ENCODE measurements at regions of chr5 and their contacts with region 1.

Region 1: DNA sequence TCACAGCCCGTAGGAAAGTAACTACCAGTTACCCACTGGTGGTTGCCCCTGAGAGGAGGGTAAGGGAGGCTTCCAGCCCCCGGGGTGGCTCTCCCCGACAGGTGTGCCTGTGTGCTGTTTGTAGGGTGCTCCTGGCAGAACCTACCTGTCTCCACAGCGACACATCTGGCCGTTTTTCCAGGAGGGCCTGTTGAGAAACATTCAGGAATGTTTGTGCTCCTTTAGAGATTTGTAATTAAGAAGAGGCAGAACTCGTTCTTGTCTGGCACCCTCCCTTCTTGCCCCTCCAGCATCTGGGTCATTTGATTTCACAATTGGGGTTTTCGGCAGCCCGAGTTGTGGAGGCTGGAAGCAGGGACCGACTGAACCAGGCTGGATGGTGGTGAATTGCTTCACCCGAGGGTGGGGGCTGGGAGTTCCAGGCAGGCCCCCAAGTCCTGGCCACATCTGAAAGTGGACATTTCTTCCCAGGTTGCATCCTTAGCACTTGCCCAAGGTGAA is 74.2 kb downstream of the WWC1 start:
- DNase-seq: peak; percentile 75
- ATAC-seq: peak; percentile 32
- H3K4me3 ChIP-seq: peak overlapping the region; percentile 43
- H3K27ac ChIP-seq: peak overlapping the region; percentile 93
- H3K4me1 ChIP-seq: peaks cover 64% of the 10 kb centered on the region
- H3K27me3 ChIP-seq: no peaks in the 10 kb centered on the region
- CTCF ChIP-seq: peak; percentile 71

Region 2: GRCh38 chr5:168328814-168329213 is 36.8 kb before region 1 on chr5:
- CTCF ChIA-PET with region 1: interaction called, 3 read pairs
- POLR2A ChIA-PET with region 1: no interaction called
- intact Hi-C with region 1: loop called (anchors 1 kb)
- DNase-seq: peak; percentile 30
- ATAC-seq: no peak
- H3K4me3 ChIP-seq: peak overlapping the region; percentile 44; the same call in 1 of the 2 replicates
- H3K27ac ChIP-seq: peak overlapping the region; percentile 21; the same call in 1 of the 2 replicates
- H3K4me1 ChIP-seq: peaks cover 74% of the 10 kb centered on the region
- H3K27me3 ChIP-seq: no peaks in the 10 kb centered on the region
- CTCF ChIP-seq: no peak

Region 3: GRCh38 chr5:168409580-168410458 is 44.2 kb after region 1 on chr5:
- CTCF ChIA-PET with region 1: no interaction called
- POLR2A ChIA-PET with region 1: interaction called, 3 read pairs
- intact Hi-C with region 1: loop called (anchors 5 kb)
- DNase-seq: peak; percentile 62
- ATAC-seq: peak; percentile 45
- H3K4me3 ChIP-seq: peak overlapping the region; percentile 42
- H3K27ac ChIP-seq: peak overlapping the region; percentile 88
- H3K4me1 ChIP-seq: peaks cover 62% of the 10 kb centered on the region
- H3K27me3 ChIP-seq: no peaks in the 10 kb centered on the region
- CTCF ChIP-seq: no peak

Region 4: DNA sequence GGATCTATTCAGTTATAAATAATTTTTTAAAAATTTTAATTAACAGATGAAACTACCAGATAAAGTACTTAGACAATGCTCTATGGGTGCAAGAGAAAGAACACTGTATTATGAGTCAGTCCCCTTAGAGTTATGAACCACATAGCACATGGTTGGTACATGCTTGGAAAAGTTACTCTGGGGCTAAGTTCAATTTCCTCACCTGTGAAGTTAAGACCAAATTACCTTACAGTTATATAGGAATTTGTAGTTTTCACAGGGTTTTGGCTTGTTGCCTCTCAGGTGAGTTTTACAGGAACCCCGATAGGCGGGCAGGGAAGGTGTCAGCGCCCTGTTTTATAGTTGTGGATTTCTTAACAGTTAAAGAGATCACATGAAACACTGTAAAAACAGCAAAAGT is 212.4 kb after region 1 on chr5:
- CTCF ChIA-PET with region 1: no interaction called
- POLR2A ChIA-PET with region 1: no interaction called
- intact Hi-C with region 1: no loop called
- DNase-seq: peak; percentile 38
- ATAC-seq: no peak
- H3K4me3 ChIP-seq: peak overlapping the region; percentile 97
- H3K27ac ChIP-seq: peak overlapping the region; percentile 12; the same call in 1 of the 2 replicates
- H3K4me1 ChIP-seq: peaks cover 17% of the 10 kb centered on the region
- H3K27me3 ChIP-seq: no peaks in the 10 kb centered on the region
- CTCF ChIP-seq: no peak

Region 5: DNA sequence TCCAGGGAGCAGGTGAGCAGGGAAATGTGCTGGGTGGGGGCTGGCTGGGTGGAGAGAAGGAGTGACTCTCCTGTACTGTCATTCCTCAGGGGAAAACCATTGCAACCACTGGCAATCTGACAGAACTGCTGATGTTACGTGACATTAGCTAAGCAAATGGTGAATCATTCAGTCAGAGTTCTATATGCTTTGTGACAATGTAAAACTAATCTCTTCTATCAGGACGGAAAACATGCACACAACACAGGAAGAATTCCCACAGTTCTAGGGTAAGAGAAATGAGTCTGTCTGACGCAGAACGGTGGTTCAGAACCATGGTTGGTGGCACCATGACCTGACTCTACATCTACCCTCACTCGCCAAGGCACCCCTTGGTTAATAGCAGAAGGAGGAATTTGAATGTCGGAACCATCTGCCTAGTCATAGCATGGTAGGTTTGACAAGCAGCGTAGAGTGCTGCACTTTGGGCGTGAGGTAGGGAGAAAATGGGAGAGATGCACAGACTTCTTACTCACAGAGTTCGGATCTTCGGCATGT is 457.2 kb after region 1 on chr5:
- CTCF ChIA-PET with region 1: no interaction called
- POLR2A ChIA-PET with region 1: no interaction called
- intact Hi-C with region 1: no loop called
- DNase-seq: peak; percentile 68
- ATAC-seq: no peak; the same call in none of the 2 replicates
- H3K4me3 ChIP-seq: no peak overlapping the region
- H3K27ac ChIP-seq: peak overlapping the region; percentile 52
- H3K4me1 ChIP-seq: peaks cover 7% of the 10 kb centered on the region; the same call in 1 of the 2 replicates
- H3K27me3 ChIP-seq: peaks cover 74% of the 10 kb centered on the region
- CTCF ChIP-seq: no peak

Measured in PC-3 (cell line).